Pancreas (tissue), 10 donors: ENCODE measurements at regions of chr14 and their contacts with region 1.

Region 1: DNA sequence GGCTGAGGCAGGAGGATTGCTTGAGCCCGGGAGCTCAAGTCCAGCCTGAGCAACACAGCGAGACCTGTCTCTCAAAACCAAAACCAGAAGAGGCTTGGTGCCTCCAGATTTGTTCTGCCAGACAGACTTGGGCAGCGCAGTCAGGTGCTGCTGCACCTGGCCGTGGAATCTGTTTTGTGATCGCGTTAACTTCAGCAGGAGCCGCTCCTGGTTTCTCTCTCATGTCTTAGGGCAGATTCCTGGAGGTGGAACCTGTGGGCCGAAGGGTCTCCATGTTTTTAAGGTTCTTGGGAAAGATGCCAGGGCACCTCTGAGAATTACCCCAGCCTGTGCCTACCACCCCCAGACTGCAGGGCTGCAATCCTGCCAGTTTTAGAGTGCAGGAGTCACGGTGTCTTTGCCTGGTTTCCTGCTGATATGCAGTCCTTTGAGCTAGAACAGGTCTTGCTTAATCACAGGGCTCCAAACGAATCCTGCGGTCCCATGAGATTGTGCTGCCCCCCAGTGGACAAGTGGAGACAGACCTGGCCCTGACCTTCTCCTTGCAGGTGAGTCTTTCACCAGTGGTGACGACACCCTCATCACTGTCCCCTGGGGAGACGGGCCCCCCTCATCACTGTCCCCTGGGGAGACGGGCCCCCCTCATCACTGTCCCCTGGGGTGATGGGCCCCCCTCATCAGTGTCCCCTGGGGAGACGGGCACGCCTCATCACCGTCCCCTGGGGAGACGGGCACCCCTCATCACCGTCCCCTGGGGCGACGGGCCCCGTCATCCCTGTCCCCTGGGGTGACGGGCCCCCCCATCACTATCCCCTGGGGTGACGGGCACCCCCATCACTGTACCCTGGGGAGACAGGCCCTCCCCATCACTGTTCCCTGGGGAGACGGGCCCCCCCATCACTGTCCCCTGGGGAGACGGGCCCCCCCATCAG is 37.6 kb downstream of the PACS2 start:
- DNase-seq: peak; percentile 83 to 94 (median 89)
- ATAC-seq: peak; percentile 97 to 99 (median 98)
- H3K4me3 ChIP-seq: no peak overlapping the region
- H3K27ac ChIP-seq: peak overlapping the region in 1 of 4 donors; percentile 30
- H3K4me1 ChIP-seq: no peaks in the 10 kb centered on the region
- H3K27me3 ChIP-seq: no peaks in the 10 kb centered on the region
- CTCF ChIP-seq: peak; percentile 65 to 92 (median 76)

Region 2: DNA sequence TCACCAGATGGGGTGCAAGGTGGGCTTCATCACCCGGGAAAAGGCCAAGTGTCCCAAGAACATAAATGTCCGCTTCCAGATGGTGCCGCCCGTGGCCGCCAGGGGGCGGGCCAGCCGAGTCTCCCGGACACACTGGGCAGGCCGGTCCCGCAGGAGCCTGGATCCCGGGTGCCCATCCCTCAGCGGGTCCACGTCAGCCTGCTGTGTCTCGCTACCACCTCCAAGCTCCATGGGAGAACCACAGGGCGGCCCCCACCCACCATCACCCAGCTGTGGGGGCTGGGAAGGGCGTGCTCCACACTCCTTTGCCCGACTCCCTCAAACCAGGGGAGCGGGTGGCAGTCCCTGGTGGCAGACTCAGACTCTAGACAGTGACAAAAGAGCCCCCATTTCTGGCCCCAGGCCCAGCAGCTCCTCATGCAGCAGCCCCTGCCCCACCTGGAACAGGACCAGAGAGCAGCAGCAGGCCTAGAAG is 149.1 kb before region 1 on chr14:
- intact Hi-C with region 1: loop called in 2 of 3 experiments (anchors 5 kb)
- DNase-seq: peak; percentile 67 to 94 (median 84)
- ATAC-seq: peak; percentile 47 to 68 (median 53)
- H3K4me3 ChIP-seq: no peak overlapping the region
- H3K27ac ChIP-seq: no peak overlapping the region
- H3K4me1 ChIP-seq: peaks cover 14 to 25% (median 21%) of the 10 kb centered on the region in 3 donors
- H3K27me3 ChIP-seq: peaks cover 0 to 2% (median 0%) of the 10 kb centered on the region in 4 donors
- CTCF ChIP-seq: peak; percentile 77 to 96 (median 93)

Region 3: DNA sequence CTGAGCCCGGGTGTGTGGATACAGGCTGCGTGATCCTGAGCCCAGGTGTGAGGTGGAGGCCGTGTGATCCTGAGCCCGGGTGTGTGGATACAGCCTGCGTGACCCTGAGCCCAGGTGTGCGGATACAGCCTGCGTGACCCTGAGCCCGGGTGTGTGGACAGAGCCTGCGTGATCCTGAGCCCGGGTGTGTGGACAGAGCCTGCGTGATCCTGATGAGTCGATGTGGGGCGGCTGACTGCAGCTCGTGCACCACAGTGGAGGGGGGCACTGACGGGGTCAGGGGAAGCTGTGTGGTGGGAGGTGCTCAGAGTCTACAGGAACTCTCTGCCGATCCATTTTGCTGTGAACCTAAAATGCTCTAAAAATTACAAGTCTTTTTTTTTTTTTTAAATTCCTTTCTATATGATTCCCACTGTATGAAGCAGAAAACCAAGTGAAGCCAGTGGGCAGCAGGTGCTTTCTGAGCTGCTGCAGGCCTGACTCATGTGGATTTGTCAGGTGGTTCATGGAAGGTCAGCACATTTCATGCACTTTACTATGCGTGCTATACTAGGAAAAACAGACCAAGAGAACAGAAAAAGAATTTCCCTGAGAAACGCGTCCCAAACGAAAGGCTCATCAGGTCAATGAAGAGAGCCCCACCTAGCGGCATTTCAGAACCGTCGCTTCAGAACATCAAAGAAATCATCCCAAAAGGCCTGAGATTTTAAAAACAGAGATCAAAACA is 70.7 kb before region 1 on chr14:
- intact Hi-C with region 1: loop called in 1 of 3 experiments (anchors 10 kb)
- DNase-seq: peak in 3 of 6 donors; percentile 41 to 54 (median 50)
- ATAC-seq: peak; percentile 69 to 88 (median 78)
- H3K4me3 ChIP-seq: no peak overlapping the region
- H3K27ac ChIP-seq: peak overlapping the region; percentile 10 to 55 (median 34)
- H3K4me1 ChIP-seq: peaks cover 16 to 24% (median 22%) of the 10 kb centered on the region in 3 donors
- H3K27me3 ChIP-seq: no peaks in the 10 kb centered on the region
- CTCF ChIP-seq: peak; percentile 17 to 43 (median 37)